ENCODE measurements at regions of chr2 and their contacts with region 1.

Region 1: DNA sequence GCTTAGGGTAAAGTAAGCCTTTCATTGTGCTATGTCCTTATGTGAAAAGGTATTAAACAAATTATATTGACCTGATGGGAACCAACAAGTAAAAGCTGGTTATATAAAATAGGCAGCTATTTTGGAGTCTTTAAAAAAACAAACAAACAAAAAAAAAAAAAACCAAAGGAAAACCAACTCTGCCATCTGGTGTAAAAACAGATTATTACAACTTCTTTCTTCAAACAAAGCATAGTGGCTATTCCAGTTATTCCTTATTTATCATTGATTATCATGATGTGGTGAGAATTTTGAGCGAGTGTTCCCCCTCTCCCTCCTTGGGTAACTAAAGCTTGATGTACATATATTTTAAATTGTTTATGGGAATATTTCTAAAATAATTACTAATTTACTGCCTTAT is 122.4 kb upstream of the FHL2 start:
- DNase-seq: no peak
- H3K4me3 ChIP-seq: no peak overlapping the region
- H3K27ac ChIP-seq: no peak overlapping the region
- H3K27me3 ChIP-seq: peaks cover 6% of the 10 kb centered on the region
- CTCF ChIP-seq: peak; percentile 52

Region 2: DNA sequence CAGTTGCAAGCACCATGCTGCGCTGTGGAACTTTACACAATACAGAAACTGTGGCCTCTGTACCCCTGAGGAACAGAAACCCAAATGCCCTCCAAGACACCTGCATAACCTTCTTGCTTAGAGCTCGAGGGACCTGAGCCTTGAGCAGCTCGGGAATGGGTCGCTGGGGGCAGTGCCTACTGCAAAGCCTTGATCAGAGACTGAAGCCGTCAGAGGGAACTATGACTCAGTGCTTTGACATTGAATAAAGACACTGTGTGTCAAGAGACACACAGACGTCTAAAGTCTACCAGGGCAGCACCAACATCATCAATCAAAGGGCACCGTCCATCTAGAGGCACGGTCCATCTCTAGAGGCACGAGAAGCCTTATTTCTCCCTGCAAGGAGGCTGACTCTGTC is 249.0 kb before region 1 on chr2:
- CTCF ChIA-PET with region 1: no interaction called
- POLR2A ChIA-PET with region 1: no interaction called
- DNase-seq: no peak
- H3K4me3 ChIP-seq: no peak overlapping the region
- H3K27ac ChIP-seq: no peak overlapping the region
- H3K27me3 ChIP-seq: no peaks in the 10 kb centered on the region
- CTCF ChIP-seq: no peak

Region 3: GRCh38 chr2:105344704-105345345 is 176.4 kb before region 1 on chr2:
- CTCF ChIA-PET with region 1: interaction called, 233 read pairs
- POLR2A ChIA-PET with region 1: interaction called, 3 read pairs
- DNase-seq: no peak
- H3K4me3 ChIP-seq: no peak overlapping the region
- H3K27ac ChIP-seq: no peak overlapping the region
- H3K27me3 ChIP-seq: no peaks in the 10 kb centered on the region
- CTCF ChIP-seq: peak; percentile 52

Region 4: GRCh38 chr2:105369747-105370690 is 151.2 kb before region 1 on chr2:
- CTCF ChIA-PET with region 1: interaction called, 41 read pairs
- POLR2A ChIA-PET with region 1: interaction called, 3 read pairs
- DNase-seq: peak; percentile 63
- H3K4me3 ChIP-seq: no peak overlapping the region
- H3K27ac ChIP-seq: peak overlapping the region; percentile 47
- H3K27me3 ChIP-seq: no peaks in the 10 kb centered on the region
- CTCF ChIP-seq: peak; percentile 76

Region 5: DNA sequence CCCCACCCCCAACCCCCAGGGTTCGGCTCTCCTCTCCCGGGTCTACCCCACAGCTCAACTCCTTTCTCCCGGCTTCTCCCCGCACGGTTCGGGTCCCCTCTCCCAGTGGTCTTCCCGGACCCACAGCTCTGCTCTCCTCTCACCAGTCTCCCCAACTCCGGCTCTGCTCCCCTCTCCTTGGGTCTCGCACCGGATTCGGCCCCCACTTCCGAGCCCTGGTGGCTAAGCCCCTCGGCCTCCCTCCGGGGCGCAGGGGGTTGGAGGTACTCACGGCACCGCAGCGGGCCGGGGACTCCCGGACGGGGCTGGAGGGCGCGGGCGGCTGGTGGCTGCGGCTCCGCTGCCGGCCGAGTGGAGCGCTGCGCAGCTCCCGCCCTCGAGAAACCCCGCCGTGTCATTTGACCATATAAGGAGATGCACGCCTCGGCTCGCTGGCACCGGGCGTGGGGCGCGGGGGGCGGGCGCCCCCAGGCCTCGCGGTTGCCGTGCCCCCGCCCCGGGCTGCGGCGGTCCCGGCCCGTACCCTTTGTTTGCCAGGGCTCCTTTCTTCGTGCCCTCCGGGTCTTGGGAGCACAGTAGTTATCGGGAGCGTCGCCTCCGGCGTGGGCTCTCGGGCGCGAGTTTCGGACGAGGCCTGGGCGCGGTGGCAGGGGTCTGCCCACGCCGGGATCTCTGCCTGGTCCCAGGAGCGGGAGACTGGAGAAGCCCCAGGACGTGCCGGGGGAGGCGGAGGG is 122.3 kb before region 1 on chr2 and contains the start of gene FHL2:
- CTCF ChIA-PET with region 1: interaction called, 19 read pairs
- POLR2A ChIA-PET with region 1: no interaction called
- DNase-seq: peak; percentile 59
- H3K4me3 ChIP-seq: peak within 1 kb of the TSS; percentile 99
- H3K27ac ChIP-seq: peak within 1 kb of the TSS; percentile 98
- H3K27me3 ChIP-seq: no peaks in the 10 kb centered on the region
- CTCF ChIP-seq: peak; percentile 46
- polyA plus RNA-seq, gene FHL2: 497 and 555 TPM in 2 replicates

Region 6: GRCh38 chr2:105438104-105438929 is 82.9 kb before region 1 on chr2:
- CTCF ChIA-PET with region 1: interaction called, 11 read pairs
- POLR2A ChIA-PET with region 1: no interaction called
- DNase-seq: no peak
- H3K4me3 ChIP-seq: peak overlapping the region; percentile 36
- H3K27ac ChIP-seq: peak overlapping the region; percentile 89
- H3K27me3 ChIP-seq: no peaks in the 10 kb centered on the region
- CTCF ChIP-seq: no peak

Measured in AG04450 (cell line).